ENCODE measurements at regions of chr1 and their contacts with region 1.

Region 1: GRCh38 chr1:98749152-98749756 is 87.7 kb downstream of the SNX7 start:
- DNase-seq: no peak
- H3K4me3 ChIP-seq: no peak overlapping the region
- H3K27ac ChIP-seq: no peak overlapping the region
- H3K27me3 ChIP-seq: no peaks in the 10 kb centered on the region
- CTCF ChIP-seq: peak; percentile 49

Region 2: DNA sequence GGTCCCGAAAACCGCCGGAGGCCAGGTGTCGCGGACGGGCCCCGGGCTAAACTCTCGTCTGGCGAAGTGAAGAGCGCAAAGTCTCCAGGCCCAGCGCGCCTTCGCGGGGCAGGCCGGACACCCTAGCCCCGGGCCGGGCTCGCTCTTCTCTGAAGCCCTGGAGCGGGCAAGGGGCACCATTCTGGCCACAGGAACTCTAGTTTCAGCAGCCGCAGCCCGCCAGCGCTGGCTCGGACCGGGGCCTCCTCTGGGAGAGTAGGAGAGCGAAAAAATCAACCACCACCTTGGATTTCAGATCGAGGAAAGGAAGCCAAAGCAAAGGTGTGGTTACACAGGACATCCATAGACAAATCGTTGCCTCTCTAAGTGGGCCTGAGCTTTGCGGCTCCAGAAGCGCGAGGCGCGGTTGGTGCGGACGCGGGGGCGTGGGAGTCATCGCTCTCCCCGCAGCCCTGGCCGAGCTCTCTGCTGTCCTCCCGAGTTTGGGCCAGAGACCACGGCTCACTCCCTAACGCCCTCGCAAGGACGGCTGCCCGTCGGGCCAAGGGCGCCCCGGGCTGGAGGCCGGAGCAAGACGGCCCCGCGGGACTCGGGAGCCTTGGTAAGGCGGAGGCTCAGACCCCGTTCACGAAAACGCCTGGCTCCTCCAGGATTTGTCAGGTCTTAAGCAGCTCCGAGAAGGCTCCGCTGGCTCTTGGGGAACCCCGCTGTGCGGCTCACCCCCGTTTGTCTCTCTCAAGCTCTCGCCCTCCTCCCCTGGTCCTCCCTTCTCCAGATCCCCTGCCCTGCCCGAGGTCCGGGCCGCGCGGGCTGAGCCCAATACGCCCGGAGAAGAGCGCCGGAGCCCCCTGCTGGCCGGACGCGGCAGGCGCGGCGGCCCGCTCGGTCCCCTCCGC is 695.5 kb before region 1 on chr1:
- CTCF ChIA-PET with region 1: no interaction called
- POLR2A ChIA-PET with region 1: no interaction called
- DNase-seq: no peak
- H3K4me3 ChIP-seq: peak overlapping the region; percentile 53
- H3K27ac ChIP-seq: peak overlapping the region; percentile 88
- H3K27me3 ChIP-seq: no peaks in the 10 kb centered on the region
- CTCF ChIP-seq: peak; percentile 69

Region 3: DNA sequence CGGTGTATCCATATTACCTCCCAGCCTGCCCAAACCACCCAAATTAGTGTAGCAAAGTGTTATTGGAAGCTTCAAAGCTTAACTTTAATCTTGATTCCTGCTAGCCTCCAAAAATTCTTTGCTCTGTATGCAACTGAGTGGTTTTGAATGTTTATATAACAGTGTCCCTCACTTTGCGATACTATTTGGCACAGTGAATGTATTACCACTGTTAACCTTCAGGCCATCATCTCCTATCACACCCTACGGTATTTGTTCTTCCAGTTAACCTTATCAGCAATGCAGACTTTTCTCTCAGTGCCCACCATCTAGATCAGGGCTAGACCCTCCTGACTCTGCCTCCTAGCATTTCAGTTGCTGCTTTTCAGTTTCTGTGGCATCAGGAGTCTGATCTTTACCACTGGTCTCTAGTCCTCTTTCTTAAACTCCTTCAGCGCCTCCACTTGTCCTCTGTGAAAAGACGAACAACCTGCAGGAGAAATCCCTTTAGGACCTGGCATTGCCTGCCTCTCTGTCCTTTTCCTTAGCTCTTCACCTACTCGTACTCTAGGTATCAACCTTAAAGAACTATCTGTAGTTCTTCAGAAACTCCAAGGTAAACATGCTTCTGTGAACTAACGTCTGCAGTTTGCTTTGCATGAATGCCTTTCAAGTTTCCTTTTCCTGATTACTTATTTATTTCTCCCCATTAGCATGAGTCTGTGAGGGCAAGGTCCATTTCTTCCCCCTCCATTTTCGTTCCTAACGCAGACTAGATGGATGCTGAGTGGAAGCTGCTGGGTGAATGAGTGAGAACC is 16.1 kb before region 1 on chr1:
- CTCF ChIA-PET with region 1: interaction called, 10 read pairs
- POLR2A ChIA-PET with region 1: no interaction called
- DNase-seq: no peak
- H3K4me3 ChIP-seq: no peak overlapping the region
- H3K27ac ChIP-seq: no peak overlapping the region
- H3K27me3 ChIP-seq: no peaks in the 10 kb centered on the region
- CTCF ChIP-seq: no peak

Region 4: GRCh38 chr1:98783821-98784220 is 34.6 kb after region 1 on chr1:
- CTCF ChIA-PET with region 1: no interaction called
- POLR2A ChIA-PET with region 1: no interaction called
- DNase-seq: no peak
- H3K4me3 ChIP-seq: no peak overlapping the region
- H3K27ac ChIP-seq: no peak overlapping the region
- H3K27me3 ChIP-seq: no peaks in the 10 kb centered on the region
- CTCF ChIP-seq: no peak